CD8-positive, alpha-beta T cell (primary cell): ENCODE measurements at regions of chr5 and their contacts with region 1.

Region 1: DNA sequence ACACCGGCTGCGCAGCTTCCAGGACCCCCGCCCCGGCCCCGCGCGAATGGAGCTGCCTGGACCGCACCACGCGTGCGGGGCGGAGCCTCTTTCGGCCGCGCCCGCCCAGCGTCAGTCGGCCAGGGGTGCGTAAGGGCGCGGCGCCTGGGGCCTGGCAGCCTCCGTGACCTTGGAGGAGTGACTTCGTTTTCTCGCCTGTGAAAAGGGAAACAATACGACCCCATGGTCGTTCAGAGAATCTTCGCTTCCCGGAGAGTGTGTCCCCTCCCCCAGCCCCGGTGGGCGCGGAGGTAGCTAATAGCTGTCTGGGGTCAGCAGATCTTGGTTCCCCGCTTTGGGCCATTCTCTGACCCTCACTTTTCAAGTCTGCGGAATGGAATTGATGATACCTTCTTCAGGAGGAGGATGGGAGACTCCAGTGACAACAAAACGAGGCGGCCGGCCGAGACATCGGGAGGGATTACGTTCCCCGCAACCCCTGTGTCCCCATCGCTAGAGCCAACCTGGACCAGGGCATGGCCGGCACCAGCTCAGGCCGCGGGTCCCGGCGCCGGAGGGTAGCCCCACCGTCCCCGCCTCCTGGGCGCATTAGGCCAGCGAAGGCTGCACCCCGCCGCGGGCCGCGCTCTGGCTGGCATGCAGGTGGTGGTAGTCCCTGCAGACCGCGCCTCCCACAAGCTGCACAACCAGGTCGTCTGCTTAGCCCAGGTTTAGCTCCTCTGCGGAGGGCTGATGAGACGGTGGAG is 5.5 kb upstream of the CDHR2 start:
- DNase-seq: peak; percentile 52 to 89 (median 72)
- ATAC-seq: peak; percentile 57
- H3K4me3 ChIP-seq: peak overlapping the region; percentile 70 to 91
- H3K4me3 Mint-ChIP-seq: peak overlapping the region; percentile 91
- H3K27ac ChIP-seq: peak overlapping the region; percentile 87 to 89
- H3K27ac Mint-ChIP-seq: peak overlapping the region; percentile 96
- H3K4me1 ChIP-seq: peaks cover 68% of the 10 kb centered on the region
- H3K4me1 Mint-ChIP-seq: peaks cover 74% of the 10 kb centered on the region
- H3K27me3 ChIP-seq: no peaks in the 10 kb centered on the region
- H3K27me3 Mint-ChIP-seq: no peaks in the 10 kb centered on the region
- CTCF ChIP-seq: no peak

Region 2: DNA sequence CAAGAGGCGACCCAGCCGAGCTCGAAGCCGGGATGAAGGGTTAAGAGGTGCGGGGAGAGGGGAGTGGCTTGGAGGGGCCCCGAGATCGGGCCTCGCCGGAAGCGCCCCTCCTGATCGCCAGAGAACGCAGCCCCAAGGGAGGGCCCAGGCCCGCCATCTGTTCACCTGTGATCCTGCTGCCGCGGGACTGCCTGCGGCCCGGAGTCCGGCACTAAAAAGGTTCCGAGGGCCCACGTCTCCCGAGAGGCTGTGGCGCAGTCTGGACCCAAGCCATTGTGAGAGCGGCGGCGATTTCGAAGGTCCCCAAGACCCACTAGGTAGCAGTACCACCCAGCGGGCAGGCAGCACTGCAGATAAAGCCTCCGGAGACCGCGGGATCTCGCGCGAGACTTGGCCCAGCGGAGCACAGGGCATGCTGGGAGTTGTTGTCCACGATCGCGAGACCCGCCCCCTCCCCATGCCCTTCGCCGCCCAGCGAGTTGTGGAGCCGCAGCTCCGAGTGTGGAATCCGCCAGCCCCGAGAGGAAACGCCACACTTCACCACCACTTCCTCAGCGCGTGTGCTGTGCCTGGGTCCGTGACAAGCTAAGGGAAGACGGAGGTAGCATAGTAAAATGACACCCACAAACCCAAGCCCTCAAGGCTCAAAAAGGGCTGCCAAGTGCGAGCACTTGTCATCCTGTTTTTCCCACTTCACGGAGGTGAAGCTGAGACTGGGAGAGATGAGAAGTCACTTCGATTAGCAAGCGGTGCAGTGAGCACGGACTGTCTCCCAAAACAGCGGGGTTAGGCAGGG is 182.0 kb before region 1 on chr5 and contains the start of gene KIAA1191:
- CTCF ChIA-PET with region 1: no interaction called
- POLR2A ChIA-PET with region 1: interaction called, 5 read pairs
- intact Hi-C with region 1: loop called in 1 of 2 experiments (anchors 2 kb)
- DNase-seq: peak; percentile 91 to 98 (median 95)
- ATAC-seq: peak; percentile 89
- H3K4me3 ChIP-seq: peak within 1 kb of the TSS; percentile 72 to 96
- H3K4me3 Mint-ChIP-seq: peak within 1 kb of the TSS; percentile 98
- H3K27ac ChIP-seq: peak within 1 kb of the TSS; percentile 68 to 86
- H3K27ac Mint-ChIP-seq: peak within 1 kb of the TSS; percentile 98
- H3K4me1 ChIP-seq: peaks cover 31% of the 10 kb centered on the region
- H3K4me1 Mint-ChIP-seq: peaks cover 41% of the 10 kb centered on the region
- H3K27me3 ChIP-seq: no peaks in the 10 kb centered on the region
- H3K27me3 Mint-ChIP-seq: no peaks in the 10 kb centered on the region
- CTCF ChIP-seq: no peak
- total RNA-seq, gene KIAA1191: 78.2 to 85.1 TPM

Region 3: GRCh38 chr5:176447982-176448608 is 95.5 kb before region 1 on chr5 and contains the start of gene FAF2:
- CTCF ChIA-PET with region 1: interaction called, 11 read pairs
- POLR2A ChIA-PET with region 1: interaction called, 75 read pairs
- intact Hi-C with region 1: loop called in 1 of 2 experiments (anchors 1 kb)
- DNase-seq: peak; percentile 94 to 100 (median 98)
- ATAC-seq: peak; percentile 96
- H3K4me3 ChIP-seq: peak within 1 kb of the TSS; percentile 75 to 86
- H3K4me3 Mint-ChIP-seq: peak within 1 kb of the TSS; percentile 99
- H3K27ac ChIP-seq: peak within 1 kb of the TSS; percentile 89 to 90
- H3K27ac Mint-ChIP-seq: peak within 1 kb of the TSS; percentile 99
- H3K4me1 ChIP-seq: peaks cover 26% of the 10 kb centered on the region
- H3K4me1 Mint-ChIP-seq: peaks cover 38% of the 10 kb centered on the region
- H3K27me3 ChIP-seq: no peaks in the 10 kb centered on the region
- H3K27me3 Mint-ChIP-seq: no peaks in the 10 kb centered on the region
- CTCF ChIP-seq: peak; percentile 92
- total RNA-seq, gene FAF2: 24.7 to 24.8 TPM

Region 4: DNA sequence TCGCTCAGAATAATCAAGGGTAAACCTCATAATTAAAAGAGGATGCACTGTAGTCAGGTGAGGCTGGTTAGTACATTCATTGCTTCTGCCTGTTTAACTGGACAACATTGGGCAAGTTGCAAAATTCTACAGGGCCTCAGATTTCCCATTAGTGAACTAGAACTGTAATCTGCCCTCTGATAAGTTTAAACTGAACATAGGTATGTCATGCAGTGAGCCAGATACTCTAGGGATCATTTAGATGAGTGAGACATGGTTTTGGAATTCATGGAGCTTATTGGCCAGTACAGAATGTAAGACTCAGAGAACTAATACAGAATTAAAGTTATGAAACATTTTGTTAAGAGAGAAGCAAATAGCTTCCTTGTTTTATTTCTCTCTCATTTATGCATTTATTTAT is 42.3 kb before region 1 on chr5:
- CTCF ChIA-PET with region 1: no interaction called
- POLR2A ChIA-PET with region 1: no interaction called
- intact Hi-C with region 1: loop called in 1 of 2 experiments (anchors 5 kb)
- DNase-seq: no peak
- ATAC-seq: no peak
- H3K4me3 ChIP-seq: no peak overlapping the region
- H3K4me3 Mint-ChIP-seq: no peak overlapping the region
- H3K27ac ChIP-seq: no peak overlapping the region
- H3K27ac Mint-ChIP-seq: no peak overlapping the region
- H3K4me1 ChIP-seq: no peaks in the 10 kb centered on the region
- H3K4me1 Mint-ChIP-seq: peaks cover 1% of the 10 kb centered on the region
- H3K27me3 ChIP-seq: no peaks in the 10 kb centered on the region
- H3K27me3 Mint-ChIP-seq: no peaks in the 10 kb centered on the region
- CTCF ChIP-seq: no peak

Region 5: DNA sequence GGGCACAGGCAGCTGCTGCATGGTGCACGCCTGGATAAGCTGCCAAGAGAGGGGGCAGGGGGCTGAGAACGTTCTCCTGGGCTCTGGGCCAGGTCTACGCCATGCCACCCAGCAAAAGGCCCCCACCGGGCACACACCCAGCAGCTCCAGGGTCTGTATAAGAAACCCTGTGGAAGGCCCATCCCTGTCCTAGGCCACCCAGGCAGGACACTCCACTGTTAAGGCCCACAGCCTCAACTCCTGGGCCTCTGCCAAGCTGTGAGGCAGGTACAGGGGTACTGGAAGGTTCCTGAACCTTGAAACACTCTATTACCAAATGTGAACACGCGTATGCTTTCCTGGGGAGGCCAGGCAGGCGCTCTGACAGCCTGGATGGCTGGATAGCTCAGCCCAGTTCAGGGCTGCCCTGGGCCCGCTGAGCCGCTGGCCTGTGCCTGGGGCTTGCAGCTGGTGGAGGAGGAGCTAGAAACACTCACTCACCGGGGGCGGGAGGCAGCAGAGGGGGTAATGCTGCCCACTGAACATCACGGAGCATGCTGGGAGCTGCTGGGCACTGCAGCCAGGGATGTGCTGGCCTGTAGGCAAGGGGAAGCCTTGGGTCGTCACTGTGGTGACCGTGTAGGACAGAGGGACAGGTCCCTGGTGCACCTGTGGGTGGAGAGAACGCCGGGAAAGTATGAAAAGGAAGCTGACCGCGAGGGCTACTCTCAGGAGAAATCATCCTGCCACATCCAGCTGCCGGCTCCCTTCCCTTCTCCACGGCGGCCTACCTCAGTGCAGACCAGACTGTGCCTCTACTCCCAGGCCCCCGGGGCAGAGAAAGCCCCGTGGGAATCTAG is 12.4 kb before region 1 on chr5:
- CTCF ChIA-PET with region 1: interaction called, 37 read pairs
- POLR2A ChIA-PET with region 1: interaction called, 54 read pairs
- intact Hi-C with region 1: loop called in 1 of 2 experiments (anchors 1 kb)
- DNase-seq: peak in 3 of 9 experiments; percentile 28 to 42 (median 32)
- ATAC-seq: no peak
- H3K4me3 ChIP-seq: peak overlapping the region; percentile 41 to 46
- H3K4me3 Mint-ChIP-seq: peak overlapping the region; percentile 78
- H3K27ac ChIP-seq: peak overlapping the region; percentile 32 to 69
- H3K27ac Mint-ChIP-seq: peak overlapping the region; percentile 91
- H3K4me1 ChIP-seq: peaks cover 79% of the 10 kb centered on the region
- H3K4me1 Mint-ChIP-seq: peaks cover 65% of the 10 kb centered on the region
- H3K27me3 ChIP-seq: no peaks in the 10 kb centered on the region
- H3K27me3 Mint-ChIP-seq: no peaks in the 10 kb centered on the region
- CTCF ChIP-seq: no peak

Region 6: DNA sequence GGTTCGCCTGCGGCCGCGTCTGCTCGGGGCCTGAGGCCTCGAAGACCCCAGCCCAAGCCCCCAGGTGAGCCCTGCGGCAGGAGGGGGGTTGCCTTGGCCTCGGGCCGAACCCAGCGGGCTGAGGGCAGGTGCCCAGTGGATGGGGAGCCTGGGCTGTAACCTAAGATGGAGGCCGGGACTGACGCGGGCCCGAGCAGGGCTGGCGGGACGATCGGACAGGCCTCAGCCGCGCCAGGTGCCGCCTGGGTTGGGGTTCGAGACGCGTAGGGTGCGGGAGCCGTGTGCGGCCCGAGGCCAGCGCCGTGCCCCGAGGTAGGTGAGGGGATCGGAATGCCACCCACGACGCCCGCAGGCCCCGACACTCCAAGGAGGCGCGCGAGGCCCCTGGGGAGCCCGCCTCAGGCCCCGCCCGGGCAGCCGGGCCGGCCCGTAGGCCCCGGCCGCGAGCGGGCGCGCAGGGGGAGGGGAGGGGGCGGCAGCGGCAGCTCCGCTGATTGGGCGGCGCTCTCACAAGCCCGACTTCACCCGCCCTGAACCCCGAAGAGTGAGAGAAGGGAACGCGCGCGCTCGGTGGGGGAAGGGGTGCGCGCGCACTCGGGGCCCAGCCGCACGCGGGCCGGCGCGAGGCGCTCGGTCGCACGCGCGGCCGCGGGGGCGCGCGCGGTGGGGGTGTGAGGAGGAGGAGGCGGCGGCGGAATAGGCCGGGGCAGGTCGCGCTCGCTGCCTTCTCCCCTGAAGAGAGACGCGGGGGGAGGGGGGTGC is 589.7 kb after region 1 on chr5 and contains the start of gene NSD1:
- CTCF ChIA-PET with region 1: no interaction called
- POLR2A ChIA-PET with region 1: no interaction called
- intact Hi-C with region 1: loop called in 1 of 2 experiments (anchors 5 kb)
- DNase-seq: peak; percentile 81 to 96 (median 89)
- ATAC-seq: peak; percentile 72
- H3K4me3 ChIP-seq: peak within 1 kb of the TSS; percentile 58 to 60
- H3K4me3 Mint-ChIP-seq: peak within 1 kb of the TSS; percentile 85
- H3K27ac ChIP-seq: peak within 1 kb of the TSS; percentile 64 to 85
- H3K27ac Mint-ChIP-seq: peak within 1 kb of the TSS; percentile 90
- H3K4me1 ChIP-seq: peaks cover 54% of the 10 kb centered on the region
- H3K4me1 Mint-ChIP-seq: peaks cover 55% of the 10 kb centered on the region
- H3K27me3 ChIP-seq: no peaks in the 10 kb centered on the region
- H3K27me3 Mint-ChIP-seq: no peaks in the 10 kb centered on the region
- CTCF ChIP-seq: no peak
- total RNA-seq, gene NSD1: 71.8 to 75.2 TPM

Region 7: DNA sequence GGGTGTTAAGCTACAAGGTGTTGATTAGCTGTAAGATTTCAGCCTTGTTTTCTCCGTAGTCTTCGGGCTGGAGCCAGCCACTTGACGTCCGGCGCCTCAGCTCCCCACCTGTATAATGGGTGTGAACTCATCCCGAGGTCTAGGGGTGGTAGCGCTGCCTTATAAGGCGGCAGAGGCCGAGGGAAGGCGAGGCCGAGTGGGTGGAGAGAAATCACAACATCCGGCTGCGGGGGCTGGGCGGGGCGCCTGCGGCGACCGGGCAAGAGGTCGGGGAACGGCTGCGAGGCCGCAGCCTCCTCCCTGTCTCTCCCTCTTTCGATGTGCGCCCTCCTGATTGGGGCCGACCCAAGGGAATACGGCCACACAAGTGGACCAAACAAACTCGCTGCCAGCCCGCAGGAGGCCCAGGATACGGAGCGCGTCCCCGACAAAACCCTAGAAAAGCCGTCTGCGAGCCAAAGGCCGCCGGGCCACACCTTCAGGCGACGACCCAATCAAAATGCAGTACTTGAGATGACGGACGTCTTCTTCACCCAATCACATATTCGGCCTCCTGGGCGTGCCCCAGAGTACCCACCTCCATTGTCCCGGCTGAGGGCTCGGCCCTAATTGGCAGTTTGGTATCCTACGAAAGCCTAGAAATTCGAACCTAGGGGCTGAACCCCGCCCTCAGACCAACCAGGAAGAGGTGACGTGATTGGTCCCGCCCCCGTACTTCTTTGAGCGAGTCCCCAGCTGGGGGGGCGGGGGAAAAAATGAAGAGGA is 882.4 kb after region 1 on chr5:
- CTCF ChIA-PET with region 1: no interaction called
- POLR2A ChIA-PET with region 1: no interaction called
- intact Hi-C with region 1: loop called (anchors 5 kb)
- DNase-seq: peak; percentile 99 to 100 (median 99)
- ATAC-seq: peak; percentile 80
- H3K4me3 ChIP-seq: peak overlapping the region; percentile 63 to 65
- H3K4me3 Mint-ChIP-seq: peak overlapping the region; percentile 91
- H3K27ac ChIP-seq: peak overlapping the region; percentile 86 to 92
- H3K27ac Mint-ChIP-seq: peak overlapping the region; percentile 98
- H3K4me1 ChIP-seq: peaks cover 46% of the 10 kb centered on the region
- H3K4me1 Mint-ChIP-seq: peaks cover 53% of the 10 kb centered on the region
- H3K27me3 ChIP-seq: no peaks in the 10 kb centered on the region
- H3K27me3 Mint-ChIP-seq: no peaks in the 10 kb centered on the region
- CTCF ChIP-seq: no peak